ENCODE measurements at regions of chr19 and their contacts with region 1.

Region 1: GRCh38 chr19:13880059-13881043 is 3.4 kb downstream of the NANOS3 start:
- DNase-seq: peak; percentile 97
- H3K4me3 Mint-ChIP-seq: peak overlapping the region; percentile 66
- H3K27ac Mint-ChIP-seq: peak overlapping the region; percentile 89
- H3K4me1 Mint-ChIP-seq: peaks cover 27% of the 10 kb centered on the region
- H3K27me3 Mint-ChIP-seq: peaks cover 10% of the 10 kb centered on the region

Region 2: DNA sequence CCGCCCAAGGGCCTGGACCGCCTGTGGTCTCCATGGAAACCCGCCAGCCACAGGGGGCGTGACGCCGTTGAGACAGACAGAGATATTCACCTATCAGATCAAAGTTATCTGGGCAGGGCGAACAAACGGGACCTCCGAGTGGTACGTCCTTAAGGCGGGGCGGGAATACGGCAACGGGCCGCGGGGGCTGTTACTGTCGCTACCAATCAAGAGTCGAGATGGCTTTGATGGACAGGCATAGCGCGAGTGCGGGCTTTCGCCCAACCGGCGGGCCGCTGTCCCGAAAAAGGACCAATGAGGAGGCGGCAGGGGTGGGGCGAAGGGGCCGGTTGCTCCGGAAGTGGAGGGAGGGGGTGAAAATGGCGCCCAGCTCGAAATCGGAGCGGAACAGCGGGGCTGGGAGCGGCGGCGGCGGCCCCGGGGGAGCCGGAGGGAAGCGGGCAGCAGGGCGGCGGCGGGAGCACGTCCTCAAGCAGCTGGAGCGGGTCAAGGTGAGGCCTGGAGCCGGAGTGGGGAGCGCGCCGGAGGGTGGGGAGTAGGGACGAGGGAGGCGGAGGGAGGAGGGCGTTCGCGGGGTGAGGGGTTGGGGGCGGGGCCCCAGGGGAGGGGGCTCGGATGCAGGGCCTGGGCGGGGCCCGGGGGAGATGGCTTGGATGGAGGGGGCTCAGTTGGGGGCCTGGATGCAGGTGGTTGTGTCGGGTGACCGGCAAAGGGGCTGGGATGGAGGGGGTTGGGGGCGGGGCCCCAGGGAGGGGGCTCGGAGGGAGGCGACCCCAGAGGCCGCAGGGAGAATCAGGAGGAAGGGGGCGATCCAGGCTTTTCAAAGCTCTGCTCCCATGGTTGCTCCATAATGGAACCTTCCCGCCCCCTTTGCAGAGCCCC is 72.0 kb after region 1 on chr19 and contains the start of gene DCAF15:
- intact Hi-C with region 1: loop called (anchors 1 kb)
- DNase-seq: peak; percentile 99
- H3K4me3 Mint-ChIP-seq: peak within 1 kb of the TSS; percentile 96
- H3K27ac Mint-ChIP-seq: peak within 1 kb of the TSS; percentile 86
- H3K4me1 Mint-ChIP-seq: peaks cover 17% of the 10 kb centered on the region
- H3K27me3 Mint-ChIP-seq: no peaks in the 10 kb centered on the region
- total RNA-seq, gene DCAF15: 57.8 and 61.5 TPM in 2 replicates

Region 3: GRCh38 chr19:14006243-14006765 is 126.0 kb after region 1 on chr19 and contains the start of gene RFX1:
- intact Hi-C with region 1: loop called (anchors 1 kb)
- DNase-seq: peak; percentile 99
- H3K4me3 Mint-ChIP-seq: peak within 1 kb of the TSS; percentile 87
- H3K27ac Mint-ChIP-seq: peak within 1 kb of the TSS; percentile 99
- H3K4me1 Mint-ChIP-seq: peaks cover 35% of the 10 kb centered on the region
- H3K27me3 Mint-ChIP-seq: peaks cover 2% of the 10 kb centered on the region
- total RNA-seq, gene RFX1: 16.0 and 17.0 TPM in 2 replicates

Region 4: DNA sequence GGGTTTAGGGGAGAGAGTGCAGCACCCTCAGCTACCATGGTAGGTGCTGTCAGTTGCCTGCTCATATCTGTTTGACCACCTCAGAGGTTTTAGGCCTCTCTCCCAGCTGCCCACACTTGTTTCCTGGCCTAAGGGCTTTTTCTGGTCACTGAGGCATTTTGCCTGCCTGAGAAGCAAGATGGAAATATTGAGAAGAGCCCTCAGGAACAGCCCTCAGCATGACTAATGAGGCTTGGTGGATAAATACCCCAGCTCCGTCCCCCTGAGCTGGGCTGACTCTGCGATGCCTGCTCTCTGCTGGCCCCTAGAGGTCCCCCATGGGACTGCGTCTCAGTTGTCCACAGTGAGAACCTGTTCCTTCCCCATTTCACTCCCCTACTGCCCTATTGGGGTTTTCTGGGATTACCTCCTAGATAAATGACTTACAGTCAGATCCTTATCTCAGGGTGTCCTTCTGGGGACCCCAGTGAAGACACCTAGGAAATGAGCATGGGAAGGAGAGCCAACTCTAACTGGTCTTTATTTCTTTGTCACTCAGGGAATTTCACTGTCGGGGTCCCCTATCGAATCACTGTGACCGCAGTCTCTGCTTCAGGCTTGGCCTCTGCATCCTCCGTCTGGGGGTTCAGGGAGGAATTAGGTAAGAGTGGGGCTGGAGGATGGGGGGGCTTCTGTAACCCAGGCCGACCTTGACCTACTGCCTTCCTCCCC is 168.2 kb after region 1 on chr19:
- intact Hi-C with region 1: loop called (anchors 1 kb)
- DNase-seq: peak; percentile 60
- H3K4me3 Mint-ChIP-seq: no peak overlapping the region
- H3K27ac Mint-ChIP-seq: no peak overlapping the region
- H3K4me1 Mint-ChIP-seq: peaks cover 7% of the 10 kb centered on the region
- H3K27me3 Mint-ChIP-seq: no peaks in the 10 kb centered on the region

Region 5: DNA sequence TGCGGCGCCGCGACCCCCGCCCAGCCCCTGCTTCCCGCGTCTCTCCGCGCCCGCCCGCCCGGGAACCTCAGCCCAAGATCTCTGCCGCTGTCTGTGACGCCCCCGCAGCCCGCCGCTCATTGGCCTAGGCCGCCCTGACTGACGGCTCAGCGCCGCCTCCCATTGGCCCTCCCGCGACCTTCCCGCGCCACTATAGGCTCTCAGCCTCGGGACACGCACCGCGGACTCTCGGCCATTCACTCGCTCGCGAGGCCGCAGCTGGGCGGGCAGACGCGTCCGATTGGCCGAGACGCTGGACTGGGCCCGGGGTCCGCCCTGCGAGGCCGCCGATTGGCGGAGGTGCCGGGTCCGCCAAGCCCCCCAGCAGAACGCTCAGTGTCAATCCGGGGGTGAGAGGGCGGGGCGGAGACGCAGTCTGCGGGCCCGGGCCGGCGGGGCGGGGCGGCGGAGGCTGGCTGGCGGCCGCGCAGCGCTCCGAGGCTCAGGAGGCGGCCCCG is 237.4 kb after region 1 on chr19 and contains the start of gene PRKACA:
- intact Hi-C with region 1: loop called (anchors 1 kb)
- DNase-seq: peak; percentile 99
- H3K4me3 Mint-ChIP-seq: peak within 1 kb of the TSS; percentile 94
- H3K27ac Mint-ChIP-seq: peak within 1 kb of the TSS; percentile 97
- H3K4me1 Mint-ChIP-seq: peaks cover 39% of the 10 kb centered on the region
- H3K27me3 Mint-ChIP-seq: peaks cover 2% of the 10 kb centered on the region
- total RNA-seq, gene PRKACA: 58.6 and 63.7 TPM in 2 replicates

Region 6: GRCh38 chr19:14347999-14348889 is 467.9 kb after region 1 on chr19:
- intact Hi-C with region 1: loop called (anchors 10 kb)
- DNase-seq: peak; percentile 61
- H3K4me3 Mint-ChIP-seq: peak overlapping the region; percentile 58
- H3K27ac Mint-ChIP-seq: peak overlapping the region; percentile 47
- H3K4me1 Mint-ChIP-seq: peaks cover 18% of the 10 kb centered on the region
- H3K27me3 Mint-ChIP-seq: peaks cover 5% of the 10 kb centered on the region

Region 7: GRCh38 chr19:14487370-14488125 is 607.2 kb after region 1 on chr19:
- intact Hi-C with region 1: loop called (anchors 5 kb)
- DNase-seq: no peak
- H3K4me3 Mint-ChIP-seq: no peak overlapping the region
- H3K27ac Mint-ChIP-seq: no peak overlapping the region
- H3K4me1 Mint-ChIP-seq: peaks cover 6% of the 10 kb centered on the region
- H3K27me3 Mint-ChIP-seq: no peaks in the 10 kb centered on the region

Measured in activated T-helper 1 cell treated with anti-CD3 and anti-CD28 coated beads, Interleukin-12 subunit alpha, Interleukin-12 subunit beta, Interleukin-2, Interleukin-4 antibody, amounts not matched to agents 30 ng/mL and 10 ng/mL and 1 ng/mL, durations not matched to agents 14 hours and 24 hours and 36 hours (primary cell).